Activated CD8-positive, alpha-beta T cell treated with anti-CD3 and anti-CD28 coated beads, Interleukin-2, amount 10 ng/mL, durations not matched to agents 7 days and 5 days (primary cell): ENCODE measurements at regions of chrX and their contacts with region 1.

Region 1: DNA sequence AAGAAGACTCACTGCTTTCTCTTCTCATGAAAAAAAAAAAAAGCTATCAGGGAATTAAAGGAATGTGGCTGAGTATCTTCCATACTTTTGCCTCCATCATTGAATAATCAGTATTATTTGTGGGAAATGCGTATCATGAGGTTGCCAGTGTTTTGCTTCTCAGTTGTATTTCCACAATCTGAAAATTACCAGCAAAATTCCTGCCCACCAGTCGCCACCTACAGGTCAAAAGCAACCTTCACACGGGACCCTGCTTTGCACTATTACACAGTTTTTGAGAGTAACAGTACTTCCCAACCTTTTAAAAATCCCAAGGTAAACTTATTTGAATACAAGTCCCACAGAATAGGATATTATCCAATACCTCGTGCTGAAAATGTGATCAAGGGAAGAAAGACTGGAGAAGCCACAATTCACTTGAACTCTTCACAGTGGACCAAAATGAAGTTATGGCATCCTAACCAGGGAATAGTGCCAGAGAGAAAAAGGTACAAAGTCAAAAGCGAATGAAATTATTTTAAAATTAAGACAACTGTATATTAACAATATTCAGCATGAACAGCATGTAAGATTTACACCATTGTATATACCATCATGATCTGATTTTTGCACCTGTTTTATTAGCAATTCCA is 30.4 kb downstream of the PGRMC1 start:
- DNase-seq: peak; percentile 23
- ATAC-seq: no peak
- H3K4me3 Mint-ChIP-seq: no peak overlapping the region
- H3K27ac Mint-ChIP-seq: no peak overlapping the region
- H3K4me1 Mint-ChIP-seq: no peaks in the 10 kb centered on the region
- H3K27me3 Mint-ChIP-seq: peaks cover 18% of the 10 kb centered on the region

Region 2: DNA sequence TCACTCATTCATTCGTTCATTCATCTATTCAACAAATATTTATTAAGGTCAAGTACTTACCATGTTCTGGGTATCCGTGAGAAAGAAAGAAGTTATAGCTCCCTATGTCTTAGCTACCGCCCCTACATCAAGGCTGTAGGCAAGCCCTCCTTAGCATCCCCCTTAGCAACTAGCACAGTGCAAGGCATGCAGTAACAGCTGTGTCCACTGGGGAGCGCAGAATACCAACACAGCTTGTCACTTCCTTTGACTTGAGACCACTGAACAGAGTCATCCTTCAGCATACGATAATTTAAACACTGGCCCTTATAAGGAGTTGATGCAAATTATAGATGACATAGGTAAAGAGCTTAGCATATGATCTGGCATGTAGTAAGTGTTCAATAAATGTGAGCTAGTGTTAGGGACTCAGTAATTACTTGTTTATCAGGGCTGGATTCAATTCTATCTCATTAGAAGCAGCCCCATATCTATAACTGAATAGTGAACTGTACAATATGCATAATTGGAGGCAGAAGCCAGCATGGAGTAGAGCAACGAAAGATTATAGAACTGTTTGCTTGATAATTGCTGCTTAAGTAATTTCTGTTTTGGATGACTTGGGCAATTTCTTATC is 147.6 kb before region 1 on chrX:
- CTCF ChIA-PET with region 1: interaction called, 12 read pairs
- POLR2A ChIA-PET with region 1: no interaction called
- DNase-seq: peak; percentile 63
- ATAC-seq: peak; percentile 76
- H3K4me3 Mint-ChIP-seq: no peak overlapping the region
- H3K27ac Mint-ChIP-seq: no peak overlapping the region
- H3K4me1 Mint-ChIP-seq: no peaks in the 10 kb centered on the region
- H3K27me3 Mint-ChIP-seq: peaks cover 1% of the 10 kb centered on the region

Region 3: DNA sequence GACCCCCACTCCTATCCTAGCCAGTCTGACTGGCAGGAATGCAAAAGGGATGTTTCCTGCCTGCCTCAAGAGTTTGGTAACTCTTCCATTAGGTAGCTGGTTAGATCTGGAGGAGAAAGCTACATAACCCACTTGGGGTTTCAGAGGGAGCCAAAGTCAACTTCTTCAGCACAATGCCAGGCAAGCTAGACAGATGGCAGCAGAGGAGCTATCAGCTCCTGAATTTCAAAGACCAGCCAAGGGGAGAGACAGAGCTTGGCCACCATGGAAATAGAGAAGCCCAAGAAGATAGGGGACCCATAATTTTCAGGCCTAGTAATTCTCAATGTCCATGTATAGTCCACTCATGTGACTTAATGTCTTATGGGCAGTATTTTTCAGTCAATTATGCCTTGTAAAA is 26.0 kb after region 1 on chrX:
- CTCF ChIA-PET with region 1: no interaction called
- POLR2A ChIA-PET with region 1: no interaction called
- DNase-seq: no peak
- ATAC-seq: no peak
- H3K4me3 Mint-ChIP-seq: no peak overlapping the region
- H3K27ac Mint-ChIP-seq: no peak overlapping the region
- H3K4me1 Mint-ChIP-seq: no peaks in the 10 kb centered on the region
- H3K27me3 Mint-ChIP-seq: peaks cover 7% of the 10 kb centered on the region